Caco-2 (cell line): ENCODE measurements at regions of chr1 and their contacts with region 1.

Region 1: DNA sequence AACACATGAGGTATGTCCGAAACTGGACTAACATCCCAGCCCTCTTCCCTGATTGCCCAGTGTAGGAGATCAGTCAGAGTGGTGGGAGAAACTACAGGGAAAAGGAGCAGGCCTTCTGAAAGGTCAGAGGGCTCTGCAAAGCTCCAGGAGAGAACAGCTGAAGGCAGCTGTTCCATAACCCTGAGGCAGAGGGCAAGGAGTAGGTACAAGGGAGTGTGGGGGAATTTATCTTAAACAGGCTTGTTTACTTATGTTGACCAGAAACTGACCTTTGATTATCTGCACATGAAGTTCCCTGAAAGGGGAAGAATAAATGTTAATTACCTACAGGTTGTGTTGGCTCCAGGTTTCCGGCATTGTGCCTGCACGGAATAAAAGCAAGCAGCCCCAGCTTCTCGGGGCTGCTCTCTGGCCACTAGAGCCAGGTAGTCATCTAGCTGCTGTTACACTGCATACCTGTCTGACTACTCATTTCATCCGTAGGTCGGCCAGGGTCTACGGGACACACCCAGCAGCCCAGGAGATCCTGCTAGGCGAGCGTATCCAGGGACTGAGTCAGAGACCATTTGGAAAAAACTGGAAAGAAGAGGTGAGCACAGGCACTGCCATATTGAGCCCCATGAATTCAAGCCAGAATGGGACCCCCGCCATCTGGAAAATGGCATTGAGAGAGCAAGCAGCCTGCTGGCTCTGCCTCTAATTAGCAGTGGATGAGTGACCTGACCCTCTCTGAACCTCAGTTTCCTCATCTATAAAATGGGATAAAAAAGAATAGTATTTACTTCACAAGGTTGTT is 14.9 kb upstream of the PAQR7 start:
- DNase-seq: peak; percentile 84 to 94
- H3K4me3 ChIP-seq: no peak overlapping the region
- H3K4me3 Mint-ChIP-seq: peak overlapping the region; percentile 27
- H3K27ac Mint-ChIP-seq: peak overlapping the region; percentile 80
- H3K4me1 ChIP-seq: peaks cover 58% of the 10 kb centered on the region
- H3K4me1 Mint-ChIP-seq: peaks cover 26% of the 10 kb centered on the region
- H3K27me3 ChIP-seq: no peaks in the 10 kb centered on the region
- H3K27me3 Mint-ChIP-seq: no peaks in the 10 kb centered on the region
- CTCF ChIP-seq: no peak

Region 2: DNA sequence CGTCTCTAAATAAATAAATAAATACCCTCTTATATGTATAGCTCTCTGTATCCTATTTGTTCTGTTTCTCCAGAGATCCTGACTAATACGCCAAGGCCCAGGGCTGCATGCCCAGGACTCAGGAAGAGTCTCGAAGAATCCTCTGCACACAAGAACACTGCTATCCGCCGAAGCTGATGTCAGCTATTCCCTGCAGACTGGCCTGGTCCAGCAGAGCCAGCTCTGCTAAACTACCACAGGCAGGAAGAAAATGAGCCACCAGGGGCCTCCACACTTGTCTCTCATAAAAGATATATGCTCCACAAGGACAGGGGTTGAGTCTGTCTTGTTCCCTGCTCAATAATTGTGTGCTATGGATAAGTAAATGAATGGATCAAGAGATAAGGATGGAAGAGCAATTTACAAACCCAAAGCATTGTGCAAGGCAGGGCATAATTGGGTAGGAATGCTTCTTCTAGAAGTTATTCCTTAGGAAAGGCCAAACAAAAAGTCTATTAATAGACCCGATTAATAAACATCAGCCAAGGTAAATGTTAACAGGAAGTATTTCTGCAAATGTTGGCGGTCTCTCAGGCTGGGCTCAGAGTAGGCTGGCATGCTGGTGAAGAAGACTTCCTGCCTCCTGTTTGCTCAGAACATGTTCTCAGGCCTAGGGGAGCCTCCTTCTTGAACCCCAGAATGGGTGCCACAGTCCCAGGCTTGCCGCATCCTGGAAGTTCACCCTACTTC is 300.2 kb before region 1 on chr1:
- CTCF ChIA-PET with region 1: no interaction called
- POLR2A ChIA-PET with region 1: no interaction called
- intact Hi-C with region 1: no loop called
- DNase-seq: peak in 1 of 2 experiments; percentile 23
- H3K4me3 ChIP-seq: no peak overlapping the region
- H3K4me3 Mint-ChIP-seq: no peak overlapping the region
- H3K27ac Mint-ChIP-seq: no peak overlapping the region
- H3K4me1 ChIP-seq: peaks cover 27% of the 10 kb centered on the region
- H3K4me1 Mint-ChIP-seq: peaks cover 18% of the 10 kb centered on the region
- H3K27me3 ChIP-seq: no peaks in the 10 kb centered on the region
- H3K27me3 Mint-ChIP-seq: no peaks in the 10 kb centered on the region
- CTCF ChIP-seq: no peak

Region 3: DNA sequence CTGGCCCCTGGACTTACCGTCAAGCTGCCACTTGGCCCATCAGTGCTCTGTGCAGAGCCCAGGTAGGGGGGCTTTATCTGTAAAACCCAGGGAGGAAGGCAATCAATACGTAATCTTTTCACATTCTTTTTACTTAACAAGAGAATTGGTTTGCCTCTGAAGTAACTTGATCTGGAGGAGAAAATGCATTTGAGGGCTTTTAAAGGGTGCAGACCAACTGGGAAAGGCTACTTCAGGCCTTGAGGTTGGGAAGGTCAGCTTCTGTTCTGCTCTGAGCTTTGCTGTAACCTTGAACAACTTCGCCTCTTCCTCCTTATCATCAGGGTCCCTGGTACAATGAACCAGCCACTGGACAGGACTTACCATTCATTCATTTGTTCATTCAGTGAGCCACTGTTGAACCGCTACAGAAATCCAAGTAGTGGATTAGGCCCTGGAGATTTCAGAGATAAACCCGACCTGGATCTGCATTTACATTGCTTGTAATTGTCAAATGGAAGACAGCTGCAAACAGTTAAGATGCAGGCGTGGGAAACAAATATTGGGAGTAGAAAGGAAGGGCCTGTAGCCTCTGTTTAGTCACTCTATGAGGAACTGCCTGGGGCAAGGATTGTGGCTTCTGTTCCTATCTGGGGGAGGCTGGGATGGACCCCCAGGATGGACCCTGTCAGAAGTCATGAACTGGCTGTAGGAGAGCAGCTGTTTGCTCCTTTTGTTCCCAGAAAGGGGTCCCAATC is 183.0 kb before region 1 on chr1:
- CTCF ChIA-PET with region 1: no interaction called
- POLR2A ChIA-PET with region 1: interaction called, 18 read pairs
- intact Hi-C with region 1: no loop called
- DNase-seq: no peak
- H3K4me3 ChIP-seq: no peak overlapping the region
- H3K4me3 Mint-ChIP-seq: no peak overlapping the region
- H3K27ac Mint-ChIP-seq: no peak overlapping the region
- H3K4me1 ChIP-seq: peaks cover 17% of the 10 kb centered on the region
- H3K4me1 Mint-ChIP-seq: no peaks in the 10 kb centered on the region
- H3K27me3 ChIP-seq: no peaks in the 10 kb centered on the region
- H3K27me3 Mint-ChIP-seq: no peaks in the 10 kb centered on the region
- CTCF ChIP-seq: no peak

Region 4: DNA sequence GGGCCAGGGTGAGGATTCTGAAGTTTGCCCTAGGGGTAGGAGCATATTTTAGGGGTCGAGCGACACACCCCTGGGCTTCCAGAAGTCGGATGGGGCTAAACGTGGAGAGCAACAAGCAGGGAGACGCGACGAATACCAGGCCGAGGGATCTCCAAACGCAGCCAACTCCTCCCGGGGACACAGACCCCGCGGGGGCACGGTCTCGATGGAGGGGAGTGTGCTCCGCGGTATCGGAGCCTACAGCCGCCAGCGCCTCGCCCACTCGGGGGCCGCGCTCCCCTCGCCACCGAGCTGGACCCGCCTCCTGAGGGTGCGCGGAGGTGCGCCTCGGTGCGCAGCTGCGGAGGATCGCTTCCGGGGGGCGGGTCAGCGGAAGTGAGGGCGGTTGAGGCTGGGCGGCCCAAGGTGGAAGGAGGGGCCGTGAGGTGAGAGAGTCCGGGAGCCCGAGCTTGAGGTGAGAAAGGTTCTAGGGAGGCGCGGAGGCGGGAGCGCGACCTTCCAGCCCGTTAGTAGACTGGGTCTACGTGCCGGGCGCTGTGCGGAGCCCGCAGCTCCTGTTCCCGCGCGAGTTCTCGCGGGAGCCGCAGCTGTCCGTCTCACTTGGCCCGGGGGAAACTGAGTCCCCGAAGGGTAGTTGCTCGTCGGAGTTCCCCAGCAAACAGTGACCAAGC is 70.7 kb before region 1 on chr1 and contains the start of gene MTFR1L:
- CTCF ChIA-PET with region 1: interaction called, 3 read pairs
- POLR2A ChIA-PET with region 1: interaction called, 7 read pairs
- intact Hi-C with region 1: loop called (anchors 2 kb)
- DNase-seq: peak; percentile 89 to 91
- H3K4me3 ChIP-seq: peak within 1 kb of the TSS; percentile 66
- H3K4me3 Mint-ChIP-seq: peak within 1 kb of the TSS; percentile 77
- H3K27ac Mint-ChIP-seq: peak within 1 kb of the TSS; percentile 97
- H3K4me1 ChIP-seq: peaks cover 15% of the 10 kb centered on the region
- H3K4me1 Mint-ChIP-seq: peaks cover 26% of the 10 kb centered on the region
- H3K27me3 ChIP-seq: no peaks in the 10 kb centered on the region
- H3K27me3 Mint-ChIP-seq: no peaks in the 10 kb centered on the region
- CTCF ChIP-seq: no peak
- total RNA-seq, gene MTFR1L: 23.5 and 26.2 TPM in 2 replicates

Region 5: GRCh38 chr1:25837262-25837875 is 53.1 kb before region 1 on chr1:
- CTCF ChIA-PET with region 1: interaction called, 8 read pairs
- POLR2A ChIA-PET with region 1: no interaction called
- intact Hi-C with region 1: loop called (anchors 1 kb)
- DNase-seq: peak in 1 of 2 experiments; percentile 15
- H3K4me3 ChIP-seq: no peak overlapping the region
- H3K4me3 Mint-ChIP-seq: no peak overlapping the region
- H3K27ac Mint-ChIP-seq: peak overlapping the region; percentile 50
- H3K4me1 ChIP-seq: no peaks in the 10 kb centered on the region
- H3K4me1 Mint-ChIP-seq: peaks cover 6% of the 10 kb centered on the region
- H3K27me3 ChIP-seq: no peaks in the 10 kb centered on the region
- H3K27me3 Mint-ChIP-seq: no peaks in the 10 kb centered on the region
- CTCF ChIP-seq: peak; percentile 24 to 60

Region 6: DNA sequence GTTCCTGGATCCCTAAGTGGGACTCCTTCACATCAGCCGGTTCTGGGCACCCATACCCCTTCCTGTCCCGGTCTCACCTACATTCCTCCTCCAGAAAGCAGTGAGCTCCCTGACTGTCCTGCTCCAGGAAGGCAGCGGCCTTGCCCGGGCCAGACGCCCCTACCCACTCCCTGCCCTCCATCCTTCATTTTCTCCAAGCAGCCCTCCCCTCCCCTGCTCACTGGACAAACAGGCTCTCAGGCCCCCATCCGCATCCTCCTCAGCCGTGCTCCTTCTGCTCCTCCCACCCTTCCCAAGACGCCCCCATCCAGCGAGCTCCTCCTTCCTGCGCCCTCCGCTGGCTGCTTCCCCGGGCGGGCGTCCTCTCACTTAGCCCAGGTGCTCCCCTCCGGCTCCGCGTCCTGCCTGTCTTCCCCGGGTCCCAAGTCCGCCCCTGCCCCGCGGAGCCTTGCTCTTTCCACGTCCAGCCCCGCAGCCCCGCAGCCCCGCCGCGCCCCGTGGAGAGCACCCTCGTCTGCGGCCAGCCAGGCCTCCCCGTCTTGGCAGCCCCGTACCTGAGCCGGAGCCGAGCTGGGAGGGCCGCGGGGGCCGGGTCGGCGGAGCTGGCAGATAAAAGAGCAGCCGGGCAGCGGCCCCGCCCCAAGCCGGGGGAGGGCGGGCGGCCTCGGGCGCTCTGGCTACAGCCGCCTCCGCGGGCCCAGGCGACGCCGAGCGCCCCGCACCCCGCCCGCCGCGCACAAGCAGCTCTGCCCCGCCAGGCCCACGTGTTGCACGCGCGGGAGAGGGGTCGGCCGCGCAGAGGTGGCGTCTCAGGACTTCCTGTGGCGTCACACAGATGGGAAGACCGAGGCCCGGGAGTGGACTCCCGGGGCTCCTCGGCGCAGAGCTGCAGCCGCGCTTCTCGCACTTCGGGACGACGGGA is 15.2 kb before region 1 on chr1 and contains the start of gene PAQR7:
- CTCF ChIA-PET with region 1: interaction called, 25 read pairs
- POLR2A ChIA-PET with region 1: interaction called, 14 read pairs
- intact Hi-C with region 1: loop called (anchors 2 kb)
- DNase-seq: peak; percentile 85 to 88
- H3K4me3 ChIP-seq: peak within 1 kb of the TSS; percentile 40
- H3K4me3 Mint-ChIP-seq: peak within 1 kb of the TSS; percentile 99
- H3K27ac Mint-ChIP-seq: peak within 1 kb of the TSS; percentile 93
- H3K4me1 ChIP-seq: peaks cover 32% of the 10 kb centered on the region
- H3K4me1 Mint-ChIP-seq: peaks cover 16% of the 10 kb centered on the region
- H3K27me3 ChIP-seq: no peaks in the 10 kb centered on the region
- H3K27me3 Mint-ChIP-seq: no peaks in the 10 kb centered on the region
- CTCF ChIP-seq: peak in 1 of 2 experiments; percentile 24
- total RNA-seq, gene PAQR7: 22.3 and 26.0 TPM in 2 replicates